Calu3 (cell line): ENCODE measurements at regions of chr1 and their contacts with region 1.

Region 1: DNA sequence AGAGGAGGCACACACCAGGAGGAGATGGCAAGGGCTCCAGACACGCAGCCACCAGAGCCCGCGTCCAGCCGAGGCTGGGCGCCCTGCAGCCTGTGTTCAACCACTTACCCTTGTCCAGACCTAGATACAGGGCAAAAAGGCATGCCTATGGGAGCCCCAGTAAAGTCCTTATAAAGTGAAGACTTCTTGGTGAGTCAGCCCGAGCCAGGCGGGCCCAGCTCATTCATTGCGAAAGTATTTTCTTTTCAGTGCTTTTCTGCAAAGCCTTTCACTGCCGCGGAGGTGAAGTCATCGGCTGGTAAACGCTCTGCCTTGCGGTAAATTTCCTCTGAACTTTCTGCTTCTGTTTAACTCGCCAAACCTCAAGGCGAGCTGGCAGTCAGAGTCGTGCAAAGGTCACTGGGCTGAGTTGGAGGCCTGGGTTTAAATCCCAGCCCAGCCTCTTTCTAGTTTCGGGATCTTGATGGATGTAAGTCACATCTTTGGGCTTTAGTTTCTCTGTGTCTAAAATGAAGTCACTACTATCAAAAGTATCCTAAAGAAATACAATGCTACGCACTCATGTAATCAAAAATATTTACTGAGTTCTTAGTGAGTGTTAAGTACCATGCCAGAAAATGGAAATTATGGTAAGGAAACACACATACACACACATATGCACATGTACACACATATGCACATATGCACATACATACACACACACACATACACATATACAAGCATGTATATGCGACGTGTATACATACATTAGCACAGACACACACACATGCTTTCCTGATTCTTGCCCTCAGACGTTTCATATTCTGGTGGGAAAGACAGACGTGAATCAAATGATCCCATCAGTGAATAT is 54.7 kb upstream of the IFFO2 start:
- DNase-seq: peak; percentile 79
- H3K4me3 Mint-ChIP-seq: peak overlapping the region; percentile 44
- H3K27ac Mint-ChIP-seq: peak overlapping the region; percentile 95
- H3K4me1 Mint-ChIP-seq: peaks cover 70% of the 10 kb centered on the region
- H3K27me3 Mint-ChIP-seq: no peaks in the 10 kb centered on the region
- CTCF ChIP-seq: no peak

Region 2: DNA sequence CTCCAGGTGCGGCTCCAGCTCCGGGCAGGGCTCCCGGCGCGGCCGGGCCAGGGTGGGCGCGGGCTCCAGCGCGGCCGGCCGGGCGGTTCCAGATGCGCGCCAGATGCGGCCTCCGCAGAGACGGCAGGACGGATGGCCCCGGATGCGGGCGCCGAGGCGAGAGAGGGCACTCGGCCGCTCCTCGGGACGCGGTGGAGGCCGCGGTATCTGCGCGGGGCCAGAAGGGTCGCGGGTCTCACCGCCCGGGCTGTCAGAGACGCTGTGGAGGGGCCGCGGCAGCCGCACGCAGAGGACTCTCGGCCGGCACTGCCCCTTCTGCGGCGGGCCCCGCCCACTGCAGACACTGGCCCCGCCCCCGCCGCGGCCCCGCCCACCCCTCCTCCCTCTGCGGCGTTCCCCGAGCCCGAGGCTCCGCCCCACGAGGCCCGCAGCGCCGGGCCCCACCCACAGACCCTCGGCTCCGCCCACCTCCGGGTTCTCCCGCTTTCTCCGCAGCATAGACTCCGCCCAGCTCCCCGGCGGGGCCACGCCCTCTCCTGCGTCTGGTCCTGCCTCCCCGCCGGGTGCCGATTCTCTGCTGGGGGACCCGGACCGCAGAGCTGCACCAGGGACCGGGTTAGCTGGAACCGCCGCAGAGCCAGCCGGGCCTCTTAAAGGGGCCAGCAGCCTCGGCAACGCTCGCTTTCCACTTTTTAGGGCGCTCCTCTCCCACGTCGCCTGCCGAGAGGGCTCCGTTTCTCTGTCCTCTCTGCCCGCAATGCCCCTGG is 54.7 kb before region 1 on chr1 and contains the start of gene IFFO2:
- CTCF ChIA-PET with region 1: interaction called, 3 read pairs
- intact Hi-C with region 1: loop called (anchors 5 kb)
- DNase-seq: peak; percentile 98
- H3K4me3 Mint-ChIP-seq: peak within 1 kb of the TSS; percentile 77
- H3K27ac Mint-ChIP-seq: peak within 1 kb of the TSS; percentile 79
- H3K4me1 Mint-ChIP-seq: peaks cover 31% of the 10 kb centered on the region
- H3K27me3 Mint-ChIP-seq: peaks cover 12% of the 10 kb centered on the region
- CTCF ChIP-seq: no peak
- total RNA-seq, gene IFFO2: 6.6 and 13.0 TPM in 2 replicates

Region 3: DNA sequence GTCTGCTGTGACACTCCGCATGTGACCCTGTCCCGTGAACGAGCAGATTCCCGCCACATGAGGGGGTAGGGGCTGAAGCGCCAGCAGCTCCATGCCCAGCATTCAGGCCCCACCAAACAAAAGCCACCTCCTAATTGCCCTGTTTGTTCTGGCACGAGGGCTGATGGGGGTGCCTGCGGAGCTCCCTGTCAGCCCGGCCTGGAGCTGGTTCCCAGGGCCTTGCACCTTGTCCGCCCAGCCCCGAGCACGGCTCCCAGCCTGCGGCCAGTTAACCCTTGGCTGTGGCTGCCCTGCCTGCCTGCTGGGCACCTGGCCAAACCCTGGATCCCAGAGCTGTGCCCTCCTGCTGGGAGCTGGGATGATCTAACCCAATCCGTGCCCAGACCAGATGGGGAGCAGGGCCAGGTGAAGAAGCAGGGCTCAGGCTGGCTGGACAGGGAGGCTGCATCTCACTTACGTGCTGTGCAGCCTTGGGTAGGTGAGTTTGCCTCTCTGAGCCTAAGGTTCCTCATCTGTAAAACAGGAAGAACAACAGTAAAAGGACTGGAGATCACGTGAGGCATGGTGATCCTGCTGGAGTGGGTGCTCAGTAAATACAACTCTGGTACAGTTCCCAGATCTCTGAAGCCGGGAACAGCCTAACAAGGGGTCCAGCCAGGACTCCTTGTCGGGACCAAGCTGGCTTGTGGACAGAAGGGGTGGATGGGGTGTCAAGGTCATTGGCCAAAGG is 56.1 kb after region 1 on chr1:
- CTCF ChIA-PET with region 1: interaction called, 3 read pairs
- intact Hi-C with region 1: loop called (anchors 5 kb)
- DNase-seq: peak; percentile 61
- H3K4me3 Mint-ChIP-seq: no peak overlapping the region
- H3K27ac Mint-ChIP-seq: no peak overlapping the region
- H3K4me1 Mint-ChIP-seq: no peaks in the 10 kb centered on the region
- H3K27me3 Mint-ChIP-seq: no peaks in the 10 kb centered on the region
- CTCF ChIP-seq: no peak

Region 4: GRCh38 chr1:19081218-19081893 is 70.1 kb after region 1 on chr1:
- CTCF ChIA-PET with region 1: interaction called, 3 read pairs
- intact Hi-C with region 1: loop called (anchors 5 kb)
- DNase-seq: no peak
- H3K4me3 Mint-ChIP-seq: peak overlapping the region; percentile 26
- H3K27ac Mint-ChIP-seq: peak overlapping the region; percentile 64
- H3K4me1 Mint-ChIP-seq: peaks cover 52% of the 10 kb centered on the region
- H3K27me3 Mint-ChIP-seq: no peaks in the 10 kb centered on the region
- CTCF ChIP-seq: no peak

Region 5: GRCh38 chr1:19096036-19096833 is 85.0 kb after region 1 on chr1:
- CTCF ChIA-PET with region 1: interaction called, 10 read pairs
- intact Hi-C with region 1: loop called (anchors 1 kb)
- DNase-seq: peak; percentile 65
- H3K4me3 Mint-ChIP-seq: no peak overlapping the region
- H3K27ac Mint-ChIP-seq: no peak overlapping the region
- H3K4me1 Mint-ChIP-seq: no peaks in the 10 kb centered on the region
- H3K27me3 Mint-ChIP-seq: no peaks in the 10 kb centered on the region
- CTCF ChIP-seq: peak; percentile 54